Right cardiac atrium (tissue), 5 donors: ENCODE measurements at regions of chr3 and their contacts with region 1.

Region 1: DNA sequence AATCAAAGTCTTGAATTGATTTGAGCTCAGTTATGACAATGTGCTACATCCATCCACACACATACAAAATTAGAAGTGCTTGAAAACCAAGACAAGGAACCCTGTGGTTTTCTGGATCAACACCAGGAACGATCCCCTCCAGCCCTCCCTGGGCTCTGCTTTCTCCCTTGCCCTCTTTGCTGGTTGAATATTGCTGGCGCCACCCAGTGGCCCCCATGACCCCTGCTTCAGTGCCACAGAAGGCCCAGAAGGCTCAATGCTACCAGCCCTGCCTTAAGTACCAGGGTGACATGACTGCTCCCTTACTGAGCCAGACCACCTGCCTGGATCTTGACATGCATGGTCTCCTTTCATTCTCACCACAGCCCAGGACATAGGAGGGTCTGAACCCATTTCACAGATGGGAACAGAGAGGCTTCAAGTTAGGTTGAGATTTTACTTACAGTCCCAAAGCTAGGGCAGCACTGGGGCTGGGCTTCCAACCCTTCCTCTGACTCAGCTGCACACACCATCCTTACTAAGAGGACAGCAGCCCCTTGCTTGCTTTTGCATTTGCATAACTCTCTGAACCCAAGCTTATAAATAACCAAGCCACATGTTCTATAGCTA is 15.0 kb downstream of the IL12A start:
- DNase-seq: peak; percentile 37 to 75 (median 74)
- ATAC-seq: peak; percentile 79 to 84
- H3K4me3 ChIP-seq: no peak overlapping the region
- H3K27ac ChIP-seq: no peak overlapping the region
- H3K4me1 ChIP-seq: no peaks in the 10 kb centered on the region
- H3K27me3 ChIP-seq: no peaks in the 10 kb centered on the region

Region 2: GRCh38 chr3:159616212-159616825 is 387.3 kb before region 1 on chr3:
- intact Hi-C with region 1: loop called in 1 of 4 experiments (anchors 10 kb)
- DNase-seq: peak; percentile 24 to 69 (median 69)
- ATAC-seq: peak; percentile 55 to 65
- H3K4me3 ChIP-seq: no peak overlapping the region
- H3K27ac ChIP-seq: no peak overlapping the region
- H3K4me1 ChIP-seq: peaks cover 3% of the 10 kb centered on the region
- H3K27me3 ChIP-seq: no peaks in the 10 kb centered on the region

Region 3: DNA sequence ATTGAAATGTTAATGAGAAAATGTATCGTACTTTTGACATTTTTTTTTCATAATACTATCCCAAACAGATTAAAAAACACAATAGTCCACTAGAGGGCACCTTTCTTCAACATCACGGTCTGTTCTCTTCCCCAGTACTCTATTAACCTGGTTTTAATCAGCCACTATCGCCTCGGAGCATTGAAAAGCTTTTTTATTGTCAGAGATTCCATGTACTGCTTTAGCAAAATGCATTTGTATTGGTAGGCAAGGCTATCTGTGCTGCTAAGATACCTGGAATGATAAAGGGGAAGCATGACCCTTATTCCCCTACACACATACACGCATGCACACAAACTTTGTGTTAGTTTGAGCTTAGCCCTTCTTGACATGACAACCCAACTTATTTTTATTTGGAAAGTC is 175.1 kb before region 1 on chr3:
- intact Hi-C with region 1: loop called (anchors 5 to 10 kb)
- DNase-seq: no peak
- ATAC-seq: peak; percentile 52 to 65
- H3K4me3 ChIP-seq: no peak overlapping the region
- H3K27ac ChIP-seq: no peak overlapping the region
- H3K4me1 ChIP-seq: peaks cover 4% of the 10 kb centered on the region
- H3K27me3 ChIP-seq: no peaks in the 10 kb centered on the region

Region 4: DNA sequence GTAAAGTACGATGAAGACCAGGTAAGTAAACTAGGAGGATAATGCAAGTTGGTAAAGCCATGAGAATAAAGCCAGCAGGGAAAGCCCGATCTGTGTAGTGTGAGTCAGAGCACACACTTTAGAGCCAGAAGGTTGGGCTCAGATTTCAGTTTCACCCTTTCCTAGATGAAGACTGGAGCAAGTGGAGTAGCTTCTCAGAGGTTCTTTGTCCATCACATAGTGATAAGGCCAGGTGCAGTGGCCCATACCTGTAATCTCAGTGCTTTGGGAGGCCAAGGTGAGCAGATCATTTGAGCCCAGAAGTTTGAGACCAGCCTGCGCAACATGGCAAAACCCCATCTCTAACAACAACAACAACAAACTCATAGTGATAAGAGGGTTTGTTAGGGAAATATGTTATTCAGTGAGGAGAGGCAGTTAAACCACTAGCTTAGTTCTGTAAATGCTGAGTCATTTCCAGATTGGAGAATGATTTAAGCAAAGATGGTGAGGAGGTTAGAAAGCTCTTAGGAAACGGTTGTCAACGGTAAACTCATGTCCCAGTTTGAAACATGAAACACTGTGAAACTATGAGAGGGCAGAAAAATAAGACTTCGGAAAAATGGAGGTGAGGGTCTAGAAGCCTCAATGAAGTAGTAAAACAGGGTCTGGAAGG is 24.0 kb after region 1 on chr3:
- intact Hi-C with region 1: no loop called
- DNase-seq: no peak
- ATAC-seq: no peak
- H3K4me3 ChIP-seq: no peak overlapping the region
- H3K27ac ChIP-seq: no peak overlapping the region
- H3K4me1 ChIP-seq: no peaks in the 10 kb centered on the region
- H3K27me3 ChIP-seq: no peaks in the 10 kb centered on the region